ENCODE measurements at regions of chr10 and their contacts with region 1.

Region 1: DNA sequence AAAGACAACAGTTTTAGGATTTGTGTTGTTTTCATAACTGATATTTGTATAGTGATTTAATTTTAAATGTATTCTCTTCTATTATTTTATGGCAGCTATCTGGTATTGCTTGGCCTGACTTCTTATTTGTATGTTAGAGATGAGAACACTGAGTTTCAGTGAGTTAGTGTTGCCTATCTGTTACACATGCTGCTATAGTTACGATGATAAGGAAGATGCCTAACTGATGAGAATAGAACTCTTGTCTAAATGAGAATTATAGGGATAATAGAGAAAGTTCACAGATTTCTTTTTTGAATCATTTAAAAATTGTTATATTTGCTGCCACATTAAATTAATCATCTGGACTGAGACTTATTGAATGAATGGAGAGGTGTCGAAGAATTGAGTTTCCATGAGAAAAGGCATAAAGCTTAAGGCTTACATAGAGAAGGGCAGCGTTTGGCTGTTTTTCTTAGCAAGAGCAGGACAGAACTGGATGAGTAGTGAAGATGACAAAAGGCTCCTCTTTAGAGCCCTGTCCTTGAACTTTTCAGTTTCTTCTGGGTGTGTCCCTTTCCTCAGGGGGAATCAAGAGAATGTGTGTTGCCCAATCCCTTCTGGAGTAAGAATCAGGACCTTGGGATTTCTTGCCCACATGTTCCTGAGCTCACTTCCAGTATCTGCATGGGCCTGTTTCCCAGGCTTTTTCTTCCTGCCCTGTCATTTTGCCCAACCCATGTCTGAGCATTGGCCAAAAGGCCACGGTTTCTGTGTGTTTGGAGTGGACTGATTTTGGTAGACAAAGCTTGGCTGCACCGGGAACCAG is 195.6 kb upstream of the CSTF2T start:
- DNase-seq: no peak
- H3K4me3 Mint-ChIP-seq: no peak overlapping the region
- H3K27ac Mint-ChIP-seq: no peak overlapping the region
- H3K4me1 Mint-ChIP-seq: no peaks in the 10 kb centered on the region
- H3K27me3 Mint-ChIP-seq: no peaks in the 10 kb centered on the region
- CTCF ChIP-seq: no peak

Region 2: DNA sequence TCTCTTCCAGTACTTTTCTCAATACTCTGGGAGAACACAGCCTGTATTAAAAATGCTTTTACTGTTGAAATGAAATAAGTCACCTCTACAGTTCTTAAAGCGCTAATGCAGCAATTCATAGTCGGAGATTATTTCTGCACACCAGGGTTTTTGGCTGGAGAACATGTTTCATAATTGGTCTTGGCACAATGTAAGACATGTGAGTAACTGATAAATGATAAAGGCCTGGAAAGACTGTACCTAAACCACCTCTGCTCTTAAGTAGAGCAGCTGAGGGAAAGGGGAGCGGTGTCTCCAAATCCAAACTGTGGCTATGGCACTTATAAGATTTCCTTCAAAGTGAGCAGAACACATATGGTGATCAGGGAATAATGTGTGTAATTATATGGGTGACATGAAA is 1267.9 kb after region 1 on chr10:
- CTCF ChIA-PET with region 1: no interaction called
- intact Hi-C with region 1: loop called (anchors 5 kb)
- DNase-seq: no peak
- H3K4me3 Mint-ChIP-seq: no peak overlapping the region
- H3K27ac Mint-ChIP-seq: no peak overlapping the region
- H3K4me1 Mint-ChIP-seq: no peaks in the 10 kb centered on the region
- H3K27me3 Mint-ChIP-seq: no peaks in the 10 kb centered on the region
- CTCF ChIP-seq: no peak